GM12878 (cell line): ENCODE measurements at regions of chr6 and their contacts with region 1.

Region 1: GRCh38 chr6:53794720-53795253 is at the start of gene LRRC1:
- DNase-seq: peak; percentile 44
- ATAC-seq: peak; percentile 78
- H3K4me3 ChIP-seq: peak within 1 kb of the TSS; percentile 72
- H3K27ac ChIP-seq: no peak within 1 kb of the TSS
- H3K4me1 ChIP-seq: peaks cover 7% of the 10 kb centered on the region; the same call in 1 of the 2 replicates
- H3K27me3 ChIP-seq: peaks cover 0 to 5% of the 10 kb centered on the region in 2 experiments; a peak in 1 of 4 replicates
- CTCF ChIP-seq: no peak
- EP300 ChIP-seq: no peak
- POLR2A ChIP-seq: peak; percentile 71
- RAD21 ChIP-seq: no peak
- polyA plus RNA-seq, gene LRRC1: 0.35 to 0.89 TPM

Region 2: GRCh38 chr6:52210227-52210626 is 1584.6 kb before region 1 on chr6:
- CTCF ChIA-PET with region 1: no interaction called
- POLR2A ChIA-PET with region 1: no interaction called
- RAD21 ChIA-PET with region 1: no interaction called
- SMC1A ChIA-PET with region 1: no interaction called
- in situ Hi-C with region 1: no loop called
- intact Hi-C with region 1: no loop called
- DNase-seq: no peak
- ATAC-seq: peak; percentile 54
- H3K4me3 ChIP-seq: no peak overlapping the region
- H3K27ac ChIP-seq: peak overlapping the region; percentile 30; the same call in 1 of the 2 replicates
- H3K4me1 ChIP-seq: peaks cover 15% of the 10 kb centered on the region
- H3K27me3 ChIP-seq: no peaks in the 10 kb centered on the region
- CTCF ChIP-seq: no peak
- EP300 ChIP-seq: no peak
- POLR2A ChIP-seq: no peak
- RAD21 ChIP-seq: no peak

Region 3: DNA sequence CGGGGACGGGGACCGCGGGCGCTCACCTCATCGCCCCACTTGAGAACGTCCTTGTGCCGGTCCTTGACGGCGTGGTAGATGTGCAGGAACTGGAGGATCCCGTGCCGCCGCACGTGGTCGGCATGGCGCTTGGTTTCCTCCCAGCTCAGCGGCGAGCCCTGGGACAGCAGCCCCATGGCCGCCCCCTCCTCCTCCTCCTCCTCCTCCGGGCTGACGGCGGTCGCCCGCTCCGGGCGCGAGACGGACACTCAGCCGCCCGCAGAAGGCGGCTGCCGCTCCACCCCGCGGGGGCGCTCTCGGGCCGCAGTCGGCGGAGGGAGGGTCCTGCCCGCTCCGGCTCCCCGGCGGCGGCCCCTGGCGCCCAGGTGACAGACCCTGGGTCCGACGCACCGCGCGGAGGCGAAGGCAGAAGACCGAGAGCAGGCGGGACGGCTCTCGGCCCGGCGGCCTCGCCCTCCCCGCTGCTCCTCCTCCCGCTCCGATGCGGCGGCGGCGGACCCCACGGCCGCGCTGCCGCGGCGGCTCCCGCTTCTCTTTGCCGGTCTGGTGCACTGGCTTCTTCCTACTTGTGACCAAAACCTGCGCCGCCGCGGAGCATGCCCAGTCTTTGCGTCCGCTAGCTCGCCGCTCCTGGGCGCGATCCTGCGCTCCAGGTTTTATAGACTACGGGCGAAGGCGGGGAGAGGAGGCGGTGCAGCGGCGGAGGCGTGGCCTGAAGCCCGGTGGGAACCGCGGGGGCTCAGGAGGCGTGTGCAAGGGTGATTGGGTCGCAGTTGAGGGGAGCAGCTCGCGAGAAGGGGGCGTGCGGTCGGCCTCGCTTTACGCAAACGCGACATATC is 250.1 kb before region 1 on chr6 and contains the start of gene GCLC:
- CTCF ChIA-PET with region 1: no interaction called
- POLR2A ChIA-PET with region 1: no interaction called
- RAD21 ChIA-PET with region 1: no interaction called
- SMC1A ChIA-PET with region 1: no interaction called
- in situ Hi-C with region 1: no loop called
- intact Hi-C with region 1: loop called (anchors 5 kb)
- DNase-seq: peak; percentile 74
- ATAC-seq: peak; percentile 78
- H3K4me3 ChIP-seq: peak within 1 kb of the TSS; percentile 92
- H3K27ac ChIP-seq: peak within 1 kb of the TSS; percentile 61
- H3K4me1 ChIP-seq: peaks cover 9% of the 10 kb centered on the region
- H3K27me3 ChIP-seq: peaks cover 0 to 6% of the 10 kb centered on the region in 2 experiments; a peak in 1 of 4 replicates
- CTCF ChIP-seq: peak; percentile 55 to 65 (median 59); a peak in 5 of 6 replicates
- EP300 ChIP-seq: no peak; a peak in 1 of 4 replicates
- POLR2A ChIP-seq: peak; percentile 84
- RAD21 ChIP-seq: peak; percentile 44
- polyA plus RNA-seq, gene GCLC: 7.8 to 8.9 TPM

Region 4: DNA sequence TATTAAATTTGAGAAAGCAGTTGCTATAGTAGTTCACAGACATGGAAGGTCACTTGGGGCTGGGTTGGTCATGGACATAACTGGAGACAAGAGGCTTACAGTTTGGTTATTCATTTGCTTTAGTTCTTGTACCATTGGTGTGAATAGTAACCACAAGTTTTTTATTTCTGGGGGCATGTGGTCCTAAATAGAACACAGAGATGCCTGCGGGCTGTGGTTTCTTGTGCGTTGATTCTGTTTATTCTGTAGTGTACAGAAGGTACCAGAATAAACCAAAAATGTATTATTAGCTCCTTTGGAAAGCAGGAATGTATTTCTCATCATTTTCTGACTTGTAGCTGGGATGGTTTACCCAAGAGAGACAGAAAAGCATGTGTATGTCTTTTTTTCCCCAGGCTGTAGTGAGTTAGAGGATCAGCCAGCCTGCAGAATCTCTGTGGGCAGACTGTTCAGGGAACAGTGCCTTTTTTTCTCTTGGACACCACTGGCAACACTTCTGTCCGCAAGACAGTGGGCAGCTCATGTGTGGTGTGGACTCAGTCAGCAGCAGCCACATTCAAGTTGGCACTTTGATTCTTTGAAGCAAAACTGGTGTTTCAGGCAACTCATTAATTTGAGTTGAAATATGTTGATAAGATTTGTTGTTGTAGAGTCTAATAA is 122.1 kb after region 1 on chr6:
- CTCF ChIA-PET with region 1: no interaction called
- POLR2A ChIA-PET with region 1: no interaction called
- RAD21 ChIA-PET with region 1: no interaction called
- SMC1A ChIA-PET with region 1: no interaction called
- in situ Hi-C with region 1: no loop called
- intact Hi-C with region 1: loop called (anchors 10 kb)
- DNase-seq: no peak
- ATAC-seq: peak; percentile 72
- H3K4me3 ChIP-seq: no peak overlapping the region
- H3K27ac ChIP-seq: no peak overlapping the region
- H3K4me1 ChIP-seq: no peaks in the 10 kb centered on the region
- H3K27me3 ChIP-seq: no peaks in the 10 kb centered on the region
- CTCF ChIP-seq: no peak
- EP300 ChIP-seq: no peak
- POLR2A ChIP-seq: no peak
- RAD21 ChIP-seq: no peak

Region 5: GRCh38 chr6:53956068-53956711 is 161.4 kb after region 1 on chr6:
- CTCF ChIA-PET with region 1: interaction called, 18 read pairs
- POLR2A ChIA-PET with region 1: no interaction called
- RAD21 ChIA-PET with region 1: interaction called, 43 read pairs
- SMC1A ChIA-PET with region 1: interaction called, 15 read pairs
- in situ Hi-C with region 1: no loop called
- intact Hi-C with region 1: loop called (anchors 1 kb)
- DNase-seq: peak; percentile 8
- ATAC-seq: peak; percentile 94
- H3K4me3 ChIP-seq: no peak overlapping the region
- H3K27ac ChIP-seq: no peak overlapping the region
- H3K4me1 ChIP-seq: no peaks in the 10 kb centered on the region
- H3K27me3 ChIP-seq: no peaks in the 10 kb centered on the region; a peak in 1 of 4 replicates
- CTCF ChIP-seq: peak; percentile 36 to 58 (median 54); a peak in 5 of 6 replicates
- EP300 ChIP-seq: no peak
- POLR2A ChIP-seq: no peak
- RAD21 ChIP-seq: 0 out of 2 replicates have a peak, but pooled peaks have one; percentile 10